Psoas muscle (tissue), 8 donors: ENCODE measurements at regions of chr10 and their contacts with region 1.

Region 1: GRCh38 chr10:110681023-110681681 is 37.0 kb downstream of the RBM20 start:
- DNase-seq: peak in 1 of 2 donors; percentile 34
- ATAC-seq: peak; percentile 51 to 63 (median 60)
- H3K4me3 ChIP-seq: peak overlapping the region; percentile 50
- H3K27ac ChIP-seq: peak overlapping the region; percentile 89
- H3K4me1 ChIP-seq: peaks cover 42% of the 10 kb centered on the region
- H3K27me3 ChIP-seq: no peaks in the 10 kb centered on the region
- CTCF ChIP-seq: peak; percentile 68

Region 2: GRCh38 chr10:110376021-110376766 is 305.0 kb before region 1 on chr10:
- intact Hi-C with region 1: no loop called
- DNase-seq: peak in 1 of 2 donors; percentile 41
- ATAC-seq: peak in 2 of 4 donors; percentile 26 to 49
- H3K4me3 ChIP-seq: no peak overlapping the region
- H3K27ac ChIP-seq: no peak overlapping the region
- H3K4me1 ChIP-seq: no peaks in the 10 kb centered on the region
- H3K27me3 ChIP-seq: no peaks in the 10 kb centered on the region
- CTCF ChIP-seq: no peak

Region 3: GRCh38 chr10:110629680-110630191 is 51.4 kb before region 1 on chr10:
- intact Hi-C with region 1: no loop called
- DNase-seq: no peak
- ATAC-seq: peak; percentile 43 to 63 (median 51)
- H3K4me3 ChIP-seq: no peak overlapping the region
- H3K27ac ChIP-seq: peak overlapping the region; percentile 71
- H3K4me1 ChIP-seq: peaks cover 14% of the 10 kb centered on the region
- H3K27me3 ChIP-seq: no peaks in the 10 kb centered on the region
- CTCF ChIP-seq: no peak

Region 4: DNA sequence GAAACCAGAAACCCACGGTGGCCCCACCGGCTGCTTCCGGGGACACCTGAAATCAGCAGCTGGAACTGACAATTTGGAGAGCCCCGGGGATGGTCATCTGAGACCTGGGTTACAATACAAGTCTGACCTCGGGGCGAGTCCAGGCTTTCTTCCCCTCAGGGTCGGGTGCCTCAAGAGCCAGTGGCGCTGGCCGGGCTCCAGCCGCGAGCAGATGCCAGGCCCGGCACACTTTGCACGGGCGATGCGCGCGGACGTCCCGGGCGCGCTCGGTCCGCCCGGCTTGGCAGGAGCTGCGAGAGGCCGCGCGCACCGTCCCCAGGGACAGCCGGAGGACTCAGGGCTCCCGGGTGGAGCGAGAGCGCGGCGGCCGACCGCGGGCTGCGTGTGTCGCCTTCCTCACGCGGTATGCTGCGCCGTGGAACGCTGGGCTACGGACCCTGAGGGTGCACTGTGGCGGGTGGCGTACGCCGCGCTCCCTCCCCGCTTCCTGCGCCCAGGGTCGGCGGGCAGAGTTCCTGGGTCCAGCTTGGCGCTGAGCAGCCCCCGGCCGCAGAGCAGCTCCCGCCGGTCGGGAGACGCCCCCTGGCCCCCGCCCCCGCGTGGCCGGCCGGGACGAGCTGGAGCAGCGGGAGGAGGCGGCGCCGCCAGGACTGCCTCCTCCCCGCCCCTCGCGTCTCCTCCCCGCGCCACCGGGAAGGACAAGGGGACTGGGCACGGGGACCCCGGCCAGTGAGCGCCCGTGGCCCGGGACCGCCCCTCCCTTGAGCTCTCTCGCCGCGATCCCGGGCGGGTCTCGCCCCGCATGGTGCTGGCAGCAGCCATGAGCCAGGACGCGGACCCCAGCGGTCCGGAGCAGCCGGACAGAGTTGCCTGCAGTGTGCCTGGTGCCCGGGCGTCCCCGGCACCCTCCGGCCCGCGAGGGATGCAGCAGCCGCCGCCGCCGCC is 37.2 kb before region 1 on chr10 and contains the start of gene RBM20:
- intact Hi-C with region 1: loop called (anchors 5 kb)
- DNase-seq: peak; percentile 62 to 89
- ATAC-seq: peak; percentile 80 to 87 (median 85)
- H3K4me3 ChIP-seq: peak within 1 kb of the TSS; percentile 88
- H3K27ac ChIP-seq: peak within 1 kb of the TSS; percentile 96
- H3K4me1 ChIP-seq: peaks cover 25% of the 10 kb centered on the region
- H3K27me3 ChIP-seq: peaks cover 0 to 4% (median 0%) of the 10 kb centered on the region in 3 donors
- CTCF ChIP-seq: no peak
- total RNA-seq, gene RBM20: 14.2 to 48.8 (median 25.1) TPM

Region 5: DNA sequence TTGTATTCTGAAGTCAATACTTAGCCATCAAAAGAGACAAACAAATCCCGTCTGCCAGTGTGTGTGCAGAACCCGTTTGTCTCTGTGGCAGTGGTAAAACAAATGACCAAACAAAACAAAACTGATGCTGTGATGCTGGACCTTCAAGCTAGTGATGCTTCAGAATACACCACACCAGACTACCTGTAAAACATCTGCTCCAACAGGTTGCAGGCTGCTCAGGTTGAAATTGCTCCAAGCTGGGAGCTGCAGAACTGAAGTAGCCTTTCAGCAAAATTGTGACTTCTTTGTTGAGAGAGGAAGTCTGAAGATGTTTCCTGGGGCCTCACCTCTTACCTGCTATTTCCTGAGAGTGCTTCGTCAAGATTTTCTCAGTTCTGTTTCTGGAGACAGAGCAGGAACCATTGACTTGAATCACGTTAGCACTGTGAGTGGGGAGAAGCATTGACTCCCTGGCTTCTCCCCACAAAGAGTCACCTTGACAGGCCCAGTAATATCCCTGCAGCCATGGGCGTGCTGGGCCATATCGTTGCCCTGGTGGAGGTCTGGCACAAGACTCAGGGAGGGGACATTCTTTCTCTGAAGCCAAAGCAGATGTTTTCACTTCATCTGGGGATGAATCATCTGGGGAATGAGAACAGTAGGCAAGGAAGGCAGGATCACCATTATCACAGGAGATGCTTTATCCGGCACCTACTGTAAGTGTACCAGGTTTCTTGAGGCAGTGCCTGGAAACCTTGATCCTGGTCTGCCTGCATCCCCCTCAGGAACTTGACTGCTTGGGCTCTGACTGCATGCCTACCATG is 43.2 kb after region 1 on chr10:
- intact Hi-C with region 1: no loop called
- DNase-seq: no peak
- ATAC-seq: peak in 2 of 4 donors; percentile 13 to 27
- H3K4me3 ChIP-seq: no peak overlapping the region
- H3K27ac ChIP-seq: peak overlapping the region; percentile 94
- H3K4me1 ChIP-seq: peaks cover 75% of the 10 kb centered on the region
- H3K27me3 ChIP-seq: no peaks in the 10 kb centered on the region
- CTCF ChIP-seq: no peak

Region 6: GRCh38 chr10:110944792-110945396 is 263.7 kb after region 1 on chr10:
- intact Hi-C with region 1: no loop called
- DNase-seq: no peak
- ATAC-seq: peak in 3 of 4 donors; percentile 53 to 61 (median 54)
- H3K4me3 ChIP-seq: no peak overlapping the region
- H3K27ac ChIP-seq: no peak overlapping the region
- H3K4me1 ChIP-seq: peaks cover 3% of the 10 kb centered on the region
- H3K27me3 ChIP-seq: no peaks in the 10 kb centered on the region
- CTCF ChIP-seq: no peak